ENCODE measurements at regions of chr3 and their contacts with region 1.

Region 1: GRCh38 chr3:11060500-11061251 is 68.1 kb downstream of the SLC6A1 start:
- DNase-seq: peak; percentile 58 to 63 (median 58)
- ATAC-seq: peak; percentile 90
- H3K4me3 ChIP-seq: no peak overlapping the region
- H3K4me1 ChIP-seq: no peaks in the 10 kb centered on the region
- CTCF ChIP-seq: peak; percentile 69

Region 2: DNA sequence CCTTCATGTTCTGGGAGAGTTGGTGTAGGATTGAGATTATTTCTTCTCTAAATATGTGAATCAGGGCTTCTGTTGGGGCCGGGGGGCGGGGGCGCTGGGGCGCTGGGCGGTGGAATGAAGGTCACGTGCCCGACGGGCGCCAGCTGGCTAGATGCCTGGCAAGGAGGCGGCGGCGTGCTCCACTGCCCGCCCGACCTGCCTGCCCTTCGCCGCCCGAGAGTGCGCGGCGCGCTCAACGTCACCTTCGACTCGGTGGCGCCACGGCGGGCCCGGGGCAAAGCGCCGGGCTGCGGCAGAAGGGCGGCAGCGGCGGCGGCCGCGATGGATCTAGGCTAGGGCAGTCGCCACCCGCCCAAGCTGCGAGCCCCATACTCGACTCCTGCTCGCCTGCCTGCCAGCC is 1460.1 kb before region 1 on chr3:
- intact Hi-C with region 1: no loop called
- DNase-seq: peak; percentile 57 to 83 (median 69)
- ATAC-seq: peak; percentile 89
- H3K4me3 ChIP-seq: no peak overlapping the region
- H3K4me1 ChIP-seq: no peaks in the 10 kb centered on the region
- CTCF ChIP-seq: no peak

Region 3: DNA sequence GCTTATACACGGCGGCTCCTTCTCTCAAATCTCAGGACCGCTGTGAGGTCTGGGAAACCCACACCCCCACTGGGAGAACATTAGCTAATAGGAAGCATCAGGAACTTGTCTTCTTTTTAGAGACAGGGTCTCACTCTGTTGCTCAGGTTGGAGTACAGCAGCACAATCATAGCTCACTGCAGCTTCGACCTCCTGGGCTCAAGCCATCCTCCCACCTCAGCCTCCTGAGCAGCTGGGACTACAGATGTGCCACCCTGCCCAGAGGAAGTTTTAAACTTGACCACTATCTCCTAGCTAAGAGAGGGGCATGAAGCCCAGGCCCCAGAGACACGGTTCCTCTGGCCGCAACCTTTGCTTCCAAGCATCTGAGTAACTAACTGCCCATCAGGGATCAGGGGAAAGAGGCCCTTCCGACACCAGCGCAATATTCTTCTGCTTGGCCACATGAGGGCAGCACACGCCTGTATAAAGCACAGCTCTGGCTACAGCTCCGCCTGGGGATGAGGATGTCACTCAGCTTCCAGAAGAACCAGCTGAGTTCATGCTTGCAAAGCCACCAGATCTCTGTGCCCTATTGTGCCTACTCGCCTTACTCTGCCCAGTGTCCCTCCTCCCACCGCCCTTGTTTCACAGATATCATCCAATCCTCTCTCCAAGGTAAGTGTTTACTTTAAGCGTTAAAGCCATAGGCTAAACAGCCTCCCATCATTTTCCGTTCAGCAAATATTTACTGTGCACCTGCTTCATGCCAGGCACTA is 302.2 kb before region 1 on chr3:
- intact Hi-C with region 1: loop called in 1 of 2 experiments (anchors 5 kb)
- DNase-seq: peak in 2 of 3 donors; percentile 32 to 61
- ATAC-seq: peak; percentile 90
- H3K4me3 ChIP-seq: no peak overlapping the region
- H3K4me1 ChIP-seq: no peaks in the 10 kb centered on the region
- CTCF ChIP-seq: no peak

Region 4: DNA sequence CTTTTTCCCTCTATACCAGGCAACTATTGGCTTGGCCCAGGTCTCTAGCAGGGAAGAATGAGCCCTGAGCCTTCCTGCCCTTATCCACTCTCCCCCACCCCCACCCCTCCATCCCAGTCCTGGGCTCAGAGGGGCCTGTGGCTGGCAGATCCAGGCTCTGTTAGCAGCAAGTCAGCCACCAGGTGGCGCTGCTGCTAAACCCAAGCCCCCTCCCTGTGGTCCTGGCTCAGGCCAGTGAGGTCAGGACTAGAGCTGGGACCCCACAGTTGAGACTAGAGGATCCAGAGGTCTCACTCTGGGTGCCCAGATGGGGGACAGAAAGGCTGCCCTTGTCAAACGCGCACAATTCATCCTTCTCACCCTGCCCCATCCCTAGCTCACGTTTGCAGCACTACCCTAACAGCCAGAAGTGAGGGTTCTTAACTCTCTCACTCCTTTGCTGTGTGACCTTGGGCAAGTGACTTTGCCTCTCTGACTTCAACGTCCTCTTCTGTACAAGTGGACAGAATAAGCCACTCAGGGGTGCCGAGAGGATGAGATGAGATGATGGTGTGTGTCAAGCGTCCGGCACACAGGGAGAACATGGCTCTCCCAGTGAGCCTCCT is 114.9 kb before region 1 on chr3:
- intact Hi-C with region 1: loop called (anchors 5 kb)
- DNase-seq: peak in 2 of 3 donors; percentile 65 to 67
- ATAC-seq: peak; percentile 69
- H3K4me3 ChIP-seq: no peak overlapping the region
- H3K4me1 ChIP-seq: no peaks in the 10 kb centered on the region
- CTCF ChIP-seq: peak; percentile 66

Region 5: GRCh38 chr3:11335056-11335608 is 274.5 kb after region 1 on chr3:
- intact Hi-C with region 1: loop called in 1 of 2 experiments (anchors 5 kb)
- DNase-seq: peak in 1 of 3 donors; percentile 66
- ATAC-seq: peak; percentile 73
- H3K4me3 ChIP-seq: no peak overlapping the region
- H3K4me1 ChIP-seq: no peaks in the 10 kb centered on the region
- CTCF ChIP-seq: peak; percentile 38